Left colon (tissue), 2 donors: ENCODE measurements at regions of chr4 and their contacts with region 1.

Region 1: DNA sequence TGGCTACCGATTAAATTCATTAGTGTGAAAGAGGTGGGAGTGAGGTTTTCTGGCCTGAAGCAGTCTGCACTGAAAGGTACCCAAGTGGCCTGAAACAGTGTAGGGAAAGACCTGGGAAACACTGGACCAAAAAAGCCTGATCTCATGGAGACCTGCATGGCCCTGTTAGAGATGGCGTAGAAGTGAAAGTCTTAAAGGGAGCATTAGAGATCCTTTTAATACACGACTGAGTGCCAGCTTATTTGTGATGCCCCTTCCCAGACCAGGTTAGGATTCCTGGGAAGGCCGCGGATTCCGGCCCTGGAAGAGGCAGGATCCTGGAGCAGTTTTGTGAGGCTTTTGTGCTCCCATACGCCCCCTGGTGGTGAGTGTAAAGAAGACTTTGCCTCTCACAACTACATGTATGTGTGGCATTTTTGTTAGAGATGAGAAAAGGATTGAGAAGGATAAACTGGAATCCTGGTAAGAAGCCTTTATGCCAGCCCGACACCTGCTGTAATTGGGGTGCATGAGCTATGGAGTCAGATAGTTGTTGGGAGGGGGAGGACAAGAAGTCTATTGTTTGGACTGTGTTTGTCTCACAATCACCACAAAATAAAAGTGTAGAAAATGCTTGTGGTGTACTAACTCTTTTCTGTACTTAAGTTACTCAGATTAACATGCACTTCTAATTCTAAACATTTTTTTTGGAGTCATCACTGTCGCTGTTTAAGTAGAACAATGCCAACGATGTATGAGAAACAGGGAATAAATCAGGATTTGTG is 54.0 kb downstream of the JADE1 start:
- DNase-seq: peak; percentile 58 to 73
- ATAC-seq: peak; percentile 82

Region 2: DNA sequence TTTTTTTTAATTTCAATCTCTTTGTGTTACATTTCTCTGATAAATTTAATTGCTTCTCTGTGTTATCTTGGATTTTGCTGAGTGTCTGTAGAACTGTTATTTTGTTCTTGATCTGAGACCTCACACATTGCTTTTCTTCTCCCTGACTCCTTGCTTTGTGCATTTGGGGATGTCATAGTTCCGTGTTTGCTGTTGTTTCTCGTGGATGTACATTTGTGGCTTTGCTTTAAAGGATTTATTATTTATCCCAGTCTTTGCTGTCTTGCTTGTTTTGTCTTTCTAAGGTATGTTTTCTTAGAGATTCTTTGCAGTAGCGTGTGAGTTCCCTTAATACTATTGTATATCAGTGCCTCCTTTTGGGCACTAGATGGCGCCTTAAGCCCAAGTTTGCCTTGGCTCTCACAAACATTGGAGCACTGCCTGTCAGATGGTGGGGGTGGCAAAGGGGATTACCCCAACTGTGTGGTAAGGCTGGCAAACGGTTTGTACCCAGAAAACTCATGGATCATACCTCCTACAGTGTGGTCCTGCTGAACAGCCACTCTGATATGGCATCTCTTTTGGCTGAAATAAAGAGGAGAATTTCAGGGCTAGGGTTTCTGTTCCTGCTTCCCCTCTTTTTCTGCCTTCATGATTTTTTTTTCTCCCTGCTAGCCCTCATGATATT is 672.2 kb before region 1 on chr4:
- intact Hi-C with region 1: loop called in 1 of 2 experiments (anchors 5 kb)
- DNase-seq: peak; percentile 54 to 68
- ATAC-seq: peak; percentile 92

Region 3: DNA sequence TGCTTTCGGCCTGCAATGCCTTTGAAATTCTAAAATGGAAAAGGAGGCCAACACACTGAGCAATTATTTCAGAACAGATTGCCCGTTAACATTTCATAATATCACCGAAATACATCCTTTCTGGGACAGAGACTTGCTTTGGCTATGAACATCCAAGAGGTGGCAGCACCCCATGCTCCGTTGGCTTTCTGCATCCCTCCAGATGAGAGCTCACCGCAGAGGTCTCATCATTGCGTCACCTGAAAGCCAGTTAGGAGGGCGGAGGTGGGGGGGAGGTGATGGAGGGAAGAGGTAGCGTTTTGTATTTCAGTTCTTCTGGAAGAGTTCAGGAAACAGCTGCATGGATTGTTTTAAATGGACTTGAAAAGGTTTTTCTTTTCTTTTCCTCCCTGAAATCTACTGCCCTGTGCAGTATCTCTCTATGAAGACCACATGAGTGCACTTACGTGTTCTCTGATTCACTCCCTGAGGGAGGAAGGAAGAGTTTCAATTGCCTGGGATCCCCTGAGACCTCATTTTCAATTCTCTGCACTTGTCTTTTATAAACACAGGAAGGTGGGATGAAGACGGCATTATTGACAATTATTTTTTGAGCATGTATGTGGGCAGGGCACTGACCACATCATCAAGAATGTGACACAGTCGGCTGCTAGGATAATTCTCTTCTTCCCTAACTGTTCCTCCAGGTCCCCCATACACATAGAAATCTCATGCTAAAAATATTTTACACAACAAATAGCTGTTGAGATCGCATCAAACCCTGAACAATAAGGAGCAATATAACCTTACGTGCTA is 409.0 kb before region 1 on chr4:
- intact Hi-C with region 1: loop called in 1 of 2 experiments (anchors 10 kb)
- DNase-seq: peak; percentile 67 to 70
- ATAC-seq: peak; percentile 87

Region 4: DNA sequence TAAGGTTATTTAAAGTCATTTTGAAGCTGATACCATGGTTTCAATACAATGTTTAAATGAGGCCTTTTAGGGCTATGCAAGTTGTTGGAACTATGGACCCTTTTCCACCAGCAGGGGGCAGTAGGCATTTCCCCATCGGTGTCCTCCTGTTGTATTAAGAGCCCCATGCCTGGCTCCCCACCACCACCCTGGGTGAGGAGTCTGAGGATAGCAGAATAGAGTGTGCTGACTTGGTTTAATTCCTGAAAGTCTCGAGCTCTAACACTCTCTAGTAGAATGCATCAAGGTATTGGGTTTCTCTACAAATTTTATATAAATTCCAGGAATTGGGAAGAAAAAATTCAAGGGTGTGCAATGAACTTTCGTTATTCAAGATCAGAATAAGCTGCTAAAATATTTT is 288.8 kb before region 1 on chr4:
- intact Hi-C with region 1: loop called in 1 of 2 experiments (anchors 10 kb)
- DNase-seq: peak; percentile 65 to 83
- ATAC-seq: peak; percentile 85

Region 5: DNA sequence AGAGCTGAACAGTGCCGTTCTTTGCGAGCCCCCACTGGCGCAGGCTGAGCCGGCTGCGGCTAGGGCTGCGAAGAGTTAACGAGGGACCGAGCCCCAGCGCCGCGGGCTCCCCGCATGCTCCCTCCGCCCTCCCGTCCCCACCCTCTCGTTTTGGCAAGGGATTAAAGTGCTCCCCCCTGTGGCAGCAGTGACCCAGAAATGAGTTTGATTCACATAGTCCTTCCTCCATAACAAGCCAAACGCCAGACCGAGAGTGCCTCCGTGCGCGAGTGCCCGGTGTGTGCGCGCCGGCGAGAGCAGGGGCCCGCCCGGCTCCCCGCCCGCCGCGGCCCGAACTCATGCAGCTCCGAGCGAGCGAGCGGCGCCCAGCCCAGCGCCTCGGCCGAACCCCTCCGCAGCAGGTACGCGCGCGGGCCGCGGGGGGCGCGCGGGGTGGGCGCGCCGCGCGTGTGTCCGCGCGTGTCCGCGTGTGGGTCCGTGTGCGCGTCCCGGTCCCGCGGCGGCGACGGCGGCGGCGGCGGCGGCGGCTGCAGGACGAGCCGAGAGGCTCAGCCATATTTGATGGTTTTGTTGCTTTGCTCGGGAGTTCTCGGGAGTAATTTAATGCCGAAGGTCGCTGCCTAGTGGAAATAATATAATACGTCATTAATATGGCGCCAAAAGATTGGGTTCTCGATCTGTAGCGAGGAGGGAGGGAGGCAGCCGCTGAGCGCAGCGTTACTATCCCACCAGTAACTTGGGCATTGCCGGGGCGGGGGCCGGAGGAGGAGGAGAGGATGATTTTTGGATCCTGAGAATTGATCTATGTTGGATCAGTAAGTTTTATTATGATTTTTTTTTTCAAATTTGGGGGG is 53.8 kb before region 1 on chr4 and contains the start of gene JADE1:
- intact Hi-C with region 1: loop called in 1 of 2 experiments (anchors 10 kb)
- DNase-seq: peak; percentile 92 to 95
- ATAC-seq: peak; percentile 81
- total RNA-seq, gene JADE1: 5.4 to 8.4 TPM